ENCODE measurements at regions of chr12 and their contacts with region 1.

Region 1: DNA sequence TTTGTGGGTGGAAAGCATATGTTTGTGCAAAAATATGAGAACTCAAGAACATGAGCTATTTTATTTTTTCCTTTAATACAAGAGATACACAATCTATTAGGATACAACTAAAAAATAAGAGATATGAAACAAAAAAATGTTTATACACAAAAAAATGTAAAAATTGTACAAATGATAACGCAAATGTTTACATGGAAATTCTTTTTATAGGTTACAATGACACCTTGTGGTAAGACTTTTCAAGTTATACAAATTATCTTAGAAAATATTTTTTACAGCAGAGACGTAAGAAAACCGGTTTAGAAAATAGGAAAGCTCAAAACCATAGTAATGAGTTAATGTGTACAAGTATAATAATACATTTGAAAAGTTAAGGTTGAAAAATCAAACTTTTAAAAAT is 25.5 kb downstream of the CEP83 start:
- DNase-seq: no peak
- H3K4me3 Mint-ChIP-seq: no peak overlapping the region
- H3K27ac Mint-ChIP-seq: no peak overlapping the region
- H3K4me1 Mint-ChIP-seq: peaks cover 19% of the 10 kb centered on the region
- H3K27me3 Mint-ChIP-seq: no peaks in the 10 kb centered on the region

Region 2: GRCh38 chr12:94133964-94134795 is 300.0 kb before region 1 on chr12:
- CTCF ChIA-PET with region 1: interaction called, 7 read pairs
- POLR2A ChIA-PET with region 1: no interaction called
- intact Hi-C with region 1: loop called (anchors 1 kb)
- DNase-seq: peak; percentile 31
- H3K4me3 Mint-ChIP-seq: no peak overlapping the region
- H3K27ac Mint-ChIP-seq: no peak overlapping the region
- H3K4me1 Mint-ChIP-seq: peaks cover 2% of the 10 kb centered on the region
- H3K27me3 Mint-ChIP-seq: no peaks in the 10 kb centered on the region